CD14-positive monocyte (primary cell): ENCODE measurements at regions of chr15 and their contacts with region 1.

Region 1: DNA sequence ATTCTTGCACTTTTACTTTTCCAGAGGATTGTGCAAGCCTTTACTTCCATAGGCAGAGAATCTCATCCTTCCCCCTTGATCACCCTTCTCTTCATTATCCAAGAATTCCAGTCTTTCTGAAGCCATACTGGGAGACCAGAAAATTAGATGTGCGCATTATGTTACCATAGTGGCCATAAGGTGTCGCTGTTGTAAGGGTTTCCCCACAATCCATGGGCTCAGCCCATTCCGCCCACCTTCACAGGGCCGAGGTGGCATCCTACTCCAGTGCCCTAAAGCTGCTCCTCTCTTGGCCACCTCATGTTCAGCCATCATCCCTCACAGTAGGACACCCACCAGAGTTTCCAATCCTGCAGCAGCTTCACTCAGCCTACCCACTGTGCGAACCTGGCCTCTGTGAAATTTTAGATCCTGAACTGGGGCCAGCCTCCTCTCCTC is 35.0 kb downstream of the CTSH start:
- DNase-seq: peak; percentile 27 to 56 (median 54)
- H3K4me3 ChIP-seq: no peak overlapping the region
- H3K4me3 Mint-ChIP-seq: no peak overlapping the region
- H3K27ac ChIP-seq: peak overlapping the region; percentile 2 to 68
- H3K27ac Mint-ChIP-seq: peak overlapping the region; percentile 70 to 90 (median 79)
- H3K4me1 ChIP-seq: peaks cover 56 to 63% of the 10 kb centered on the region in 2 donors
- H3K4me1 Mint-ChIP-seq: peaks cover 63% of the 10 kb centered on the region
- H3K27me3 ChIP-seq: no peaks in the 10 kb centered on the region
- H3K27me3 Mint-ChIP-seq: no peaks in the 10 kb centered on the region
- CTCF ChIP-seq: peak; percentile 88

Region 2: GRCh38 chr15:78979456-78980320 is 69.9 kb after region 1 on chr15:
- intact Hi-C with region 1: loop called in 1 of 2 experiments (anchors 2 kb)
- DNase-seq: peak; percentile 30 to 53 (median 46)
- H3K4me3 ChIP-seq: no peak overlapping the region
- H3K4me3 Mint-ChIP-seq: no peak overlapping the region
- H3K27ac ChIP-seq: no peak overlapping the region
- H3K27ac Mint-ChIP-seq: peak overlapping the region in 4 of 7 donors; percentile 10 to 57 (median 30)
- H3K4me1 ChIP-seq: peaks cover 55% of the 10 kb centered on the region in 2 donors
- H3K4me1 Mint-ChIP-seq: peaks cover 63% of the 10 kb centered on the region
- H3K27me3 ChIP-seq: no peaks in the 10 kb centered on the region
- H3K27me3 Mint-ChIP-seq: peaks cover 0 to 5% (median 1%) of the 10 kb centered on the region in 3 donors
- CTCF ChIP-seq: peak; percentile 77

Region 3: DNA sequence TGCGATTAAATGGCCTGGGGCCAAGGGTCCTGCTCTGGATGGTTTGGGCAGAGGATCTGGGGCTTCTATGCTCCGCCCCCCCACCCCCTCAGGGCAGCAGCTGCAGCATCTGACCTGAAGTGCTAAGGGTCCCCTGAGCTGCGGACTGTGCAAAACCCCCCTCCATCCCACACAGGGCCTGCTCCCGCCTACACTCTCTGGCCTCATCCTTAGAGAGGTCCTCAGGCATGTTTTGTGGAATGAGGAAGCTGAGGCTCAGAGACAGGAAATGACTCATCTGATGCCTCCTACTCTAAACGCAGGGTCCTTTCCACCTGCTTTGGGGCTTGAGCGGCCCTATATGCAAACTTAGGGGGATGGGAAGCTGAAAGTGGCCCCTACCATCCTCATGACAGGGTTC is 94.5 kb after region 1 on chr15:
- intact Hi-C with region 1: loop called (anchors 5 kb)
- DNase-seq: peak; percentile 74 to 91 (median 89)
- H3K4me3 ChIP-seq: peak overlapping the region in 1 of 3 experiments; percentile 36
- H3K4me3 Mint-ChIP-seq: peak overlapping the region in 1 of 2 donors; percentile 65
- H3K27ac ChIP-seq: peak overlapping the region in 1 of 2 donors; percentile 39
- H3K27ac Mint-ChIP-seq: peak overlapping the region; percentile 18 to 88 (median 74)
- H3K4me1 ChIP-seq: peaks cover 28 to 40% of the 10 kb centered on the region in 2 donors
- H3K4me1 Mint-ChIP-seq: peaks cover 42% of the 10 kb centered on the region
- H3K27me3 ChIP-seq: no peaks in the 10 kb centered on the region
- H3K27me3 Mint-ChIP-seq: peaks cover 4 to 6% (median 4%) of the 10 kb centered on the region in 3 donors
- CTCF ChIP-seq: no peak

Region 4: DNA sequence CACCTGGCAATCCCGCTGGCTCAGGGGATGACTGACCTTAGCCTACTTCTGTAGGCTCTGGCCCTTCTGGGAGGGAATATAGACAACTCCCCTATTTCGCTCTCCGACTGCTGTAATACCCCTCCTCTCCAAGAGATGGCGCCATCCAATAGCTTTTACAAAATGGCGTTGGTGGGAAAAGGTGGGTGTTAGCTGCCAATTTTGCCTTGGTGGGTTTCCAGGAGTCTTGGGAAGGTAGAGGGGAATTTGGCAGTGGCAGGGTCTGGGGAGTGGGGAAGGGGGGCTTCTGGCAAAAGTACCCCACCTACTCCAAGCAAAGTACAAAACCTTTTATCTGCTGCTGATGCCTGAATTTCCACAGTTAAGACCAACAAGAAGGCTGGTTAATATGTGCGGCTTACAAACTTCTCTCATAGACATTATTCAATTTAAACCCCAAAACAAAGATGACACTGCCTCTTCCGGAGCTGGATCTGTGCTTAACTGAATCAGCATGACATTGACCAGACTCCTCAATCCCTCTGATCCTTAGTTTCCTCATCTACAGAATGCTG is 118.7 kb after region 1 on chr15:
- intact Hi-C with region 1: loop called (anchors 5 kb)
- DNase-seq: peak in 2 of 3 donors; percentile 10 to 15
- H3K4me3 ChIP-seq: no peak overlapping the region
- H3K4me3 Mint-ChIP-seq: no peak overlapping the region
- H3K27ac ChIP-seq: no peak overlapping the region
- H3K27ac Mint-ChIP-seq: peak overlapping the region in 1 of 7 donors; percentile 17
- H3K4me1 ChIP-seq: peaks cover 0 to 7% of the 10 kb centered on the region in 2 donors
- H3K4me1 Mint-ChIP-seq: peaks cover 11% of the 10 kb centered on the region
- H3K27me3 ChIP-seq: no peaks in the 10 kb centered on the region
- H3K27me3 Mint-ChIP-seq: peaks cover 0 to 6% (median under 1%) of the 10 kb centered on the region in 3 donors
- CTCF ChIP-seq: peak; percentile 77

Region 5: DNA sequence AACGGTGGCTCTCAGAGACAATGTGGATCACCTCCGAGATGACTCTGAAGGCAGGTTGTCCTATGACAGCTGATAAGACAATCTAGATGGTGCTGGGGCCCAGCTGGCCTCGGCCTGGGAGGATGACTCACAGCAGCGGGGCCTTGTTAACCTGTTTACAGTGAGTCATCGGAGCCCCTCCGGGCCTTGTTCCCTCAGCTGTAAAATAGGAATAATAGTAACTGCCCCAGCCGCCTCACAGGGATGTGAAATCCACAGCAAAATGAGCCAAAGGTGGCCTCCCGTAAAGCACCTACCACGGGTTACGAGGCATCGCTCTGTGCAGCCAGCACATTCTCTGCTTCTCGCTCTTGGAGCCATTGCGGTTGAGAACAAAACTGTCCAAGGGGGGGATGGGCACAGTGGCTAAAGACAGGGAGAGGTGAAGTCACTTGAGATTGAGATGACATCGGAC is 269.3 kb after region 1 on chr15:
- intact Hi-C with region 1: loop called (anchors 2 to 5 kb)
- DNase-seq: no peak
- H3K4me3 ChIP-seq: no peak overlapping the region
- H3K4me3 Mint-ChIP-seq: no peak overlapping the region
- H3K27ac ChIP-seq: no peak overlapping the region
- H3K27ac Mint-ChIP-seq: no peak overlapping the region
- H3K4me1 ChIP-seq: no peaks in the 10 kb centered on the region
- H3K4me1 Mint-ChIP-seq: no peaks in the 10 kb centered on the region
- H3K27me3 ChIP-seq: no peaks in the 10 kb centered on the region
- H3K27me3 Mint-ChIP-seq: peaks cover 8 to 14% (median 12%) of the 10 kb centered on the region in 3 donors
- CTCF ChIP-seq: no peak

Region 6: DNA sequence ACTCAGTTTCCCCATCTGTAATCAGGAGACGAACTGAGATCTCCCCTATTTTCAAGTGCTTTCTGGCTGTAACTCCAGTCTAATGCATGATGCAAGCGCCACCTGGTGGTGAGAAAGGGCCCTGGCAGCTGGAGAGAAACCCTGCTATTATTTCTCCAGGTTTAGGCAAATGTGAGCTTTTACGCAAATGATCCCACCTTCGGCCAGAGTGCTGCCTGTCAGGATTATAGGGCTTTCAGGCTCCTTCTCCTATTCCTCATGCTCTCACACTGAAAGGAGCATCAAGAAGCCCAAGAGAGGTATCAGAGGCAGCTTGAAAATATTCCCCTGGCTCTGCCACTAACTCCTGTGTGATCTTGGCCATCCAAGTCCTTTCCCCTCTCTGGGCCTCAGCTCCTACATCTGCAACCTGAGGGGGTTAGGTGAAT is 274.7 kb after region 1 on chr15:
- intact Hi-C with region 1: loop called (anchors 2 to 5 kb)
- DNase-seq: peak; percentile 36 to 57 (median 50)
- H3K4me3 ChIP-seq: no peak overlapping the region
- H3K4me3 Mint-ChIP-seq: no peak overlapping the region
- H3K27ac ChIP-seq: no peak overlapping the region
- H3K27ac Mint-ChIP-seq: peak overlapping the region in 1 of 7 donors; percentile 50
- H3K4me1 ChIP-seq: no peaks in the 10 kb centered on the region
- H3K4me1 Mint-ChIP-seq: no peaks in the 10 kb centered on the region
- H3K27me3 ChIP-seq: no peaks in the 10 kb centered on the region
- H3K27me3 Mint-ChIP-seq: peaks cover 0 to 9% (median 3%) of the 10 kb centered on the region in 3 donors
- CTCF ChIP-seq: peak; percentile 94